ENCODE measurements at regions of chr4 and their contacts with region 1.

Region 1: GRCh38 chr4:113732967-113733527 is 28.5 kb downstream of the CAMK2D start:
- DNase-seq: no peak
- ATAC-seq: peak; percentile 60
- H3K4me3 Mint-ChIP-seq: no peak overlapping the region
- H3K27ac Mint-ChIP-seq: peak overlapping the region; percentile 1
- H3K4me1 Mint-ChIP-seq: peaks cover 78% of the 10 kb centered on the region
- H3K27me3 Mint-ChIP-seq: no peaks in the 10 kb centered on the region

Region 2: GRCh38 chr4:113756005-113756410 is 23.0 kb after region 1 on chr4:
- CTCF ChIA-PET with region 1: interaction called, 3 read pairs
- POLR2A ChIA-PET with region 1: no interaction called
- intact Hi-C with region 1: loop called (anchors 1 to 2 kb)
- DNase-seq: no peak
- ATAC-seq: peak; percentile 78
- H3K4me3 Mint-ChIP-seq: peak overlapping the region; percentile 28
- H3K27ac Mint-ChIP-seq: peak overlapping the region; percentile 79
- H3K4me1 Mint-ChIP-seq: peaks cover 48% of the 10 kb centered on the region
- H3K27me3 Mint-ChIP-seq: no peaks in the 10 kb centered on the region

Region 3: GRCh38 chr4:113801882-113802281 is 68.8 kb after region 1 on chr4:
- CTCF ChIA-PET with region 1: no interaction called
- POLR2A ChIA-PET with region 1: no interaction called
- intact Hi-C with region 1: no loop called
- DNase-seq: no peak
- ATAC-seq: no peak
- H3K4me3 Mint-ChIP-seq: no peak overlapping the region
- H3K27ac Mint-ChIP-seq: no peak overlapping the region
- H3K4me1 Mint-ChIP-seq: peaks cover 2% of the 10 kb centered on the region
- H3K27me3 Mint-ChIP-seq: no peaks in the 10 kb centered on the region